A673 (cell line): ENCODE measurements at regions of chr7 and their contacts with region 1.

Region 1: GRCh38 chr7:75892634-75893272 is 13.9 kb downstream of the RHBDD2 start:
- DNase-seq: no peak
- H3K4me3 ChIP-seq: no peak overlapping the region
- H3K27ac ChIP-seq: no peak overlapping the region
- H3K4me1 ChIP-seq: no peaks in the 10 kb centered on the region
- H3K27me3 ChIP-seq: no peaks in the 10 kb centered on the region
- CTCF ChIP-seq: no peak

Region 2: DNA sequence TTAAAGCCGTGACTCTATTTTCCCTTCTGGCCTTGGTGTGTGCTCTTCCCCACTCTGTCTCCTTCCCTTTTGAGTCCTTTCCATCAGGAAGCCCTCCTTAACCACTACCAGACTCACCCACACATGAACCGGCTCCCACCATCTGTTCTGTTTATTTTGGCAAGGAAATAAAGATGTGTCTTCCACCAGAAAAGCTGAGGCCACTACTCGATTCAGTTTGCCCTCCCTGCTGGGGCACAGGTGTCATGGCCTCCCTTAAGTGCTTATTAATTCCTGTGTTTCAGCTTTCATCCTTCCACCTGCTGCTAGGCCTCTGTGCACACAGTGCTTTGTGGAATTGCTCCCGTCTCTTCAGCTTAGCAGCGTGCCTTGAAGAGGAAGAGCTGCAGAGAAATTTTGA is 38.9 kb after region 1 on chr7:
- CTCF ChIA-PET with region 1: no interaction called
- POLR2A ChIA-PET with region 1: no interaction called
- intact Hi-C with region 1: loop called (anchors 5 kb)
- DNase-seq: no peak
- H3K4me3 ChIP-seq: no peak overlapping the region
- H3K27ac ChIP-seq: no peak overlapping the region
- H3K4me1 ChIP-seq: no peaks in the 10 kb centered on the region
- H3K27me3 ChIP-seq: no peaks in the 10 kb centered on the region
- CTCF ChIP-seq: no peak

Region 3: GRCh38 chr7:76244781-76245391 is 352.1 kb after region 1 on chr7:
- CTCF ChIA-PET with region 1: no interaction called
- POLR2A ChIA-PET with region 1: no interaction called
- intact Hi-C with region 1: no loop called
- DNase-seq: no peak
- H3K4me3 ChIP-seq: no peak overlapping the region
- H3K27ac ChIP-seq: no peak overlapping the region
- H3K4me1 ChIP-seq: no peaks in the 10 kb centered on the region
- H3K27me3 ChIP-seq: no peaks in the 10 kb centered on the region
- CTCF ChIP-seq: no peak

Region 4: DNA sequence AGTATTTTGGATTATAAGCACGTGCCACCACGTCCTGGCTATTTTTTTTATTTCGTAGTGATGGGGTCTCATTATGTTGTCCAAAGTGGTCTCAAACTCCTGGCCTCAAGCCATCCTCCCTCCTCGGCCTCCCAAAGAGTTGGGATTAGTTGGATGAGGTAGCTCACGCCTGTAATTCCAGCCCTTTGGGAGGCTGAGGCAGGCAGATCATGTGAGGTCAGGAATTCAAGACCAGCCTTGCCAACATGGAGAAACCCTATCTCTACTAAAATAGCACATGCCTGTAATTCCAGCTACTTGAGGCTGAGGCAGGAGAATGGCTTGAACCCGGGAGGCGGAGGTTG is 487.8 kb after region 1 on chr7:
- CTCF ChIA-PET with region 1: interaction called, 10 read pairs
- POLR2A ChIA-PET with region 1: no interaction called
- intact Hi-C with region 1: no loop called
- DNase-seq: no peak
- H3K4me3 ChIP-seq: peak overlapping the region; percentile 40
- H3K27ac ChIP-seq: peak overlapping the region; percentile 81
- H3K4me1 ChIP-seq: peaks cover 17% of the 10 kb centered on the region
- H3K27me3 ChIP-seq: no peaks in the 10 kb centered on the region
- CTCF ChIP-seq: no peak